GM10248 (cell line): ENCODE measurements at regions of chr2 and their contacts with region 1.

Region 1: DNA sequence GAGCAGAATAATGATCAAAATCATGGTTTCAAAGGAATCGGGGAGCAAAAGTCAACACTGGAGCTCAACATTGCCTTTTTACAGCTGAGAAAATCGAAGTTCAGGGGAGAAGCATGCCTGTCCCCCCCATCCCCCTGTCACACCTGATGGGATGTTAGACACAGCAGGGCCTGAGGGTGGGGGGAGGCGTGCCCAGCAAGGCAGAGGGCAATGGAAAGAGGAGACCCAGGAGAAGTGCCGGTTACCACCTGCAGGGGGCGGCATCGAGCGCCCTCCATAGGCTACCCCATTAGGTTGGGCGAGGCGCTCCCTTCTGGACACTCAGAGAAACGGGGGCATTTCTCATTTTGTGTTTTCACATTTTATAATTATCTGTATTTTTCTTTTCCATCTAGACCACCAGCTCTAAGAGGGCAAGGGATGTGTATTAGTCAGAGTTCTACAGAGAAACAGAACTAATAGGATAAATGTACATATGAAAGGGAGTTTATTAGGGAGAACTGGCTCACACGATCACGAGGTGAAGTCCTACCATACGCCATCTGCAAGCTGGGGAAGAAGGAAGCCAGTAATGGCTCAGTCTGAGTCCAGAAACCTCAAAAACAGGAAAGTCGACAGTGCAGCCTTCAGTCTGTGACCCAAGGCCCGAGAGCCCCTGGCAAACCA is 271.3 kb downstream of the LRATD1 start:
- DNase-seq: peak; percentile 83
- CTCF ChIP-seq: peak; percentile 90

Region 2: GRCh38 chr2:14872779-14873325 is 31.0 kb before region 1 on chr2:
- CTCF ChIA-PET with region 1: interaction called, 20 read pairs
- POLR2A ChIA-PET with region 1: no interaction called
- DNase-seq: no peak
- CTCF ChIP-seq: no peak

Region 3: GRCh38 chr2:14891546-14891945 is 12.3 kb before region 1 on chr2:
- CTCF ChIA-PET with region 1: interaction called, 18 read pairs
- POLR2A ChIA-PET with region 1: no interaction called
- DNase-seq: no peak
- CTCF ChIP-seq: no peak

Region 4: GRCh38 chr2:14915983-14916382 is 12.1 kb after region 1 on chr2:
- CTCF ChIA-PET with region 1: interaction called, 35 read pairs
- POLR2A ChIA-PET with region 1: no interaction called
- DNase-seq: no peak
- CTCF ChIP-seq: no peak

Region 5: DNA sequence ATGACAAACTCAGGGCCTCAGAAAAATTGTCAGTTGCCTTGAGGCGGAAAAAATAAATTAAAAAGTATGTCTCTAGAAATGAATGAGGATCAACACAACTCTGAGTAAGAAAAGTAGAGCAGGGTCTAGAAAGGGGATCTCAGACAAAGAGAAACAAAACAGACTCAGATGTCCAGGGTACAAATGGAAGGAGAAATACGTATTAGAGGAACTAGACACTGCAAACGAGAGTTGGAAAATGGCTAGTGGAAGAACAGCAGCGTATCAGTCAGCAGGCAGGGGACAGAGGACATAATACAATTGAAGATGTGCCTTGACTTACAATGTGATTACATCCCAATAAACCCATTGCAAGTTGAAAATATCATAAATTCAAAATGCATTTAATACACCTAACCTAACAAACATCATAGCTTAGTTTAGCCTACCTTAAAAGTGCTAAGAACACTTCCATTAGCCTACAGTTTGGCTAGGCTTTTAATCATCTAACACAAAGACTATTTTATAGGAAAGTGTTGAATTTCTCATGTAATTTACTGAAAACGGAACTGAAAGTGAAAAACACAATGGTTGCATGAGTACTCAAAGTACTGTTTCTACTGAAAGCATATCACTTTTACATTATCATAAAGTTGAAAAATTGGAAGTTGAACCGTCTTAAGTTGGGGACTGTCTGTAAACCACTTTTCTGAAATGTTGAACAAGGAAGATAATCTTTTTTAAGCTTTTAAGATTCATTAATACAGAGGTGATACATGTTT is 474.5 kb after region 1 on chr2:
- CTCF ChIA-PET with region 1: no interaction called
- POLR2A ChIA-PET with region 1: no interaction called
- DNase-seq: peak; percentile 8
- CTCF ChIP-seq: no peak